ENCODE measurements at regions of chr13 and their contacts with region 1.

Region 1: DNA sequence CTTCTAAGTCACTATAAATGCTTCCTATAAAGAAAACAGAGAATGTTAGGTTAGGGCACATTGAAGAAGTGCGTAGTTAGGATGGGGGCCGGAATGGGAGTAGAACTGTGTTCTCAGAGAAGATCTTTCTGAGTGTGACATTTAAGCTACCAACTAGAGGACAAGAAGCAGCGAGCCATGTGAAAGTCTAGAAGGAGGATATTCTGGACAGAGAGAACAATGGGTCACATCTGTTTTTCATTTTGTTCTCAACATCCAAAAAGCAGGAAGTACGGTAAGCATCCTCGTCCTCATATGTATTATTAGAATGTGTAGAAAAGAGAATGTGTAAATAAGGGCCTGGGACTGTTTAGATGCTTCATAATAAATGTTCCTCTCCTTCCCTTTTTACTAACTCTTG is 44.5 kb upstream of the PARP4 start:
- H3K4me3 Mint-ChIP-seq: no peak overlapping the region
- H3K27ac Mint-ChIP-seq: no peak overlapping the region
- H3K4me1 Mint-ChIP-seq: peaks cover 20% of the 10 kb centered on the region
- H3K27me3 Mint-ChIP-seq: peaks cover 21% of the 10 kb centered on the region

Region 2: GRCh38 chr13:23723471-23723870 is 833.6 kb before region 1 on chr13:
- intact Hi-C with region 1: no loop called
- H3K4me3 Mint-ChIP-seq: no peak overlapping the region
- H3K27ac Mint-ChIP-seq: no peak overlapping the region
- H3K4me1 Mint-ChIP-seq: no peaks in the 10 kb centered on the region
- H3K27me3 Mint-ChIP-seq: no peaks in the 10 kb centered on the region

Region 3: DNA sequence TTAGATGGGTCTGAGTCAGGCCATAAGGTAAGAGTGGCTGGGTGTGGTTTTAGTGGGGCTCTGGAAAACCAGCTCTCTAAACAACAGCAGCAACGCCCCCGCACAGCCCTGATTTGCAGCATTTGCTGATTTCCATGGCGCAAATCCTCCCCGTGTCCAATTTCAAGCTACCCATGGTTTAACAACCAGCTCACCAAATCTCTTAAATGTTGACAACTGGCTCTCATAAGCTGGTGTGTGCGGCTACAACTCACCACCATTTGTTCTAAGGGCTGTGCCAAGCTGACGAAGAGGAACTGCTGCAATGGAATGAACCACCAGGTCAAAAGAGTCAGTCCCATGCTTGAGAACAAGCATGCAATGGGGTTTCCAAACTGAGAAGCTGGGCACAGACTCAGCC is 67.4 kb before region 1 on chr13:
- intact Hi-C with region 1: no loop called
- H3K4me3 Mint-ChIP-seq: no peak overlapping the region
- H3K27ac Mint-ChIP-seq: no peak overlapping the region
- H3K4me1 Mint-ChIP-seq: no peaks in the 10 kb centered on the region
- H3K27me3 Mint-ChIP-seq: no peaks in the 10 kb centered on the region

Region 4: GRCh38 chr13:24502533-24503378 is 54.3 kb before region 1 on chr13:
- intact Hi-C with region 1: loop called (anchors 10 kb)
- H3K4me3 Mint-ChIP-seq: no peak overlapping the region
- H3K27ac Mint-ChIP-seq: peak overlapping the region; percentile 1
- H3K4me1 Mint-ChIP-seq: peaks cover 39% of the 10 kb centered on the region
- H3K27me3 Mint-ChIP-seq: no peaks in the 10 kb centered on the region

Measured in dendritic cell treated with granulocyte-macrophage colony-stimulating factor and Interleukin-4, amounts not matched to agents 40 ng/mL and 50 ng/mL, for 4 days (primary cell).